Left lung (tissue), 14 donors: ENCODE measurements at regions of chr11 and their contacts with region 1.

Region 1: DNA sequence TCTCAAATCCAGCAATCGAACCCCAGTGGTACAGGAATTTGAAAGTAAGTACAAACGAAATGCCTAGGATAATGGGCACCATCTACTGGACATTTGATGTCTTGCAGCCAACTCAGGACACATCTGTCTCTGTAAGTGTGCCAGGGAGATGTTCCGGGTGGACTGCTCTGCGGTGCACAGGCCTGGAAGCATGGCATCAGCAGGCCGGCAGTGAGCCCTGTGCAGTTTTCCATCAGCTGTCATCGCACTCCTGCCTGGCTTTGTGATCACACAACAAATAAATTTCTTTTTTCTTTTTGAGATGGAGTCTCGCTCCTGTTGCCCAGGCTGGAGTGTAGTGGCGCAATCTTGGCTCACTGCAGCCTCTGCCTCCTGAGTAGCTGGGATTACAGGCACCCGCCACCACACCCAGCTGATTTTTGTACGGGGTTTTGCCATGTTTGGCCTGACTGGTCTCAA is 71.0 kb downstream of the JAM3 start:
- DNase-seq: peak in 2 of 4 donors; percentile 68 to 81
- ATAC-seq: peak; percentile 92
- H3K4me3 ChIP-seq: no peak overlapping the region
- H3K27ac ChIP-seq: no peak overlapping the region
- H3K4me1 ChIP-seq: no peaks in the 10 kb centered on the region
- H3K27me3 ChIP-seq: no peaks in the 10 kb centered on the region
- CTCF ChIP-seq: peak; percentile 72 to 87

Region 2: GRCh38 chr11:133927690-133928627 is 211.9 kb before region 1 on chr11:
- intact Hi-C with region 1: loop called in 1 of 2 experiments (anchors 10 kb)
- DNase-seq: peak in 3 of 4 donors; percentile 52 to 88 (median 57)
- ATAC-seq: peak; percentile 96
- H3K4me3 ChIP-seq: no peak overlapping the region
- H3K27ac ChIP-seq: no peak overlapping the region
- H3K4me1 ChIP-seq: peaks cover 0 to 9% of the 10 kb centered on the region in 2 donors
- H3K27me3 ChIP-seq: no peaks in the 10 kb centered on the region
- CTCF ChIP-seq: peak; percentile 80 to 84

Region 3: GRCh38 chr11:134033696-134034491 is 106.0 kb before region 1 on chr11:
- intact Hi-C with region 1: no loop called
- DNase-seq: peak; percentile 59 to 87 (median 85)
- ATAC-seq: peak; percentile 86
- H3K4me3 ChIP-seq: no peak overlapping the region
- H3K27ac ChIP-seq: peak overlapping the region; percentile 45 to 75
- H3K4me1 ChIP-seq: peaks cover 0 to 21% of the 10 kb centered on the region in 2 donors
- H3K27me3 ChIP-seq: peaks cover 0 to 54% of the 10 kb centered on the region in 2 donors
- CTCF ChIP-seq: no peak

Region 4: GRCh38 chr11:134050541-134051383 is 89.1 kb before region 1 on chr11:
- intact Hi-C with region 1: loop called in 1 of 2 experiments (anchors 5 kb)
- DNase-seq: peak; percentile 64 to 91 (median 78)
- ATAC-seq: peak; percentile 97
- H3K4me3 ChIP-seq: peak overlapping the region in 1 of 2 donors; percentile 25
- H3K27ac ChIP-seq: peak overlapping the region; percentile 52 to 64
- H3K4me1 ChIP-seq: no peaks in the 10 kb centered on the region
- H3K27me3 ChIP-seq: peaks cover 0 to 45% of the 10 kb centered on the region in 2 donors
- CTCF ChIP-seq: peak; percentile 83 to 85